PC-3 (cell line): ENCODE measurements at regions of chr4 and their contacts with region 1.

Region 1: DNA sequence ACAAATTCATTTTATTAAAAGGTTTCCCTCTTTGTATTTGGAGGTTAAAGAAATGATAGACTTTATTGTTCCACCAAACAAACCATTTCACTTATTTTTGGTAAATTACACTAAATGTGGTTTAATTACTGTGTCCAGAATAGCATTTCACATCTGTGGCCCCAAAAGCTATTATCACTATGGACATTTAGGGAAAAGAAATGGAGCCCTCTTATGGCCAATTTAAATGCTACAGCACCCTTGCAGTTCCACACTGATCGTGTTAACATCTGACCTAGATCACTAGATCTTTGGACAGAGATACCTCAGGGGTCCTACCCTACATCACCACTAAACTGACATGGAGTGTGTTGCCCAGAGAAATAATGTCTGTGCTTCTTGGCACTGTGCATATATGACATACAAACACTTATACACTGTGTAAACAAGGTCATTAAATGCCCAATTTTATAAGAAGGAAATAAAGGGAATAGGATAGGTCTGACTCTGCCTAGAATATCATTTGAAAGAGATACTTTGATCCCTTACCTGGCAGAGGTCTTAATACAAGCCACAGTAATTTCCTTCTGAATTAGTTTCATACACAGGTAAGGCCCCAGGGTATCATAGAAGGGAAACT is 163.9 kb downstream of the KDR start:
- DNase-seq: peak; percentile 66
- ATAC-seq: peak; percentile 88
- H3K4me3 ChIP-seq: no peak overlapping the region
- H3K27ac ChIP-seq: no peak overlapping the region
- H3K4me1 ChIP-seq: no peaks in the 10 kb centered on the region
- H3K27me3 ChIP-seq: peaks cover 17% of the 10 kb centered on the region
- CTCF ChIP-seq: peak; percentile 93

Region 2: DNA sequence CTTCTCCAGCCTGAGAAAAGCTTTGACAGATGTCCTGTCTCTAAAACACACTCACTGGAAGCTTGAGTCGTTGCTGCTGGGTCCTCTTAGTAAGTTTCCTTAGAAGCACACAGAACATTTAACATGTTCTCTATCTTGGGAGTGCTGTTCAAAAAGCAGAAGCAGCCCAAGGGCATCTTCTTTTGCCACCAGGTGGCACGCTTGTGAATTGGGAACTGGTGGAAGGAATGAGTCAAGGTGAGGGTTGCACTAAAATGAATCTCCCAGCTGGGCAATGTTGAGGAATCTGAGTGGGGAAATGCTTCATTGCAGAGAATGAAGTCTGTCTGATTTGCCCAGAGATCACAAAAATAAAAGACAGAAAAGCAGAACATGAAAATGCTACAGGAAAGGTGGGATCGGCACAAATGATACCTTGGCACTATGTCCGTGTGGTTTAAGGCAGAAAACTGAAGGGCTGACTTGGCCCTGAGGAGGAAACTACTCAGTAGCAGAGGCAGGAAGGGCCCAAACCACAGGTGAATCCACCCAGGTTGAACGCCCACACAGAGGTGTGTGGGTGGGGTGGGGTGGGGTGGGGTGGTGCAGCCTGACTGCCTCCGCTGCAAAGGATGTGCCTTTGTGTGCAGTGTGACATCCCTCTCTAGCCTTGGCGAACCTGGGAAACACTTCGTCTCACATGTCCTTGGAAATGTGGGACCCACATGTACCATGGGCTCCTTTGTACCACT is 277.7 kb before region 1 on chr4:
- CTCF ChIA-PET with region 1: no interaction called
- POLR2A ChIA-PET with region 1: no interaction called
- intact Hi-C with region 1: loop called (anchors 2 kb)
- DNase-seq: peak; percentile 84
- ATAC-seq: peak; percentile 49
- H3K4me3 ChIP-seq: no peak overlapping the region
- H3K27ac ChIP-seq: no peak overlapping the region
- H3K4me1 ChIP-seq: no peaks in the 10 kb centered on the region
- H3K27me3 ChIP-seq: peaks cover 25% of the 10 kb centered on the region; the same call in 1 of the 2 replicates
- CTCF ChIP-seq: peak; percentile 89

Region 3: DNA sequence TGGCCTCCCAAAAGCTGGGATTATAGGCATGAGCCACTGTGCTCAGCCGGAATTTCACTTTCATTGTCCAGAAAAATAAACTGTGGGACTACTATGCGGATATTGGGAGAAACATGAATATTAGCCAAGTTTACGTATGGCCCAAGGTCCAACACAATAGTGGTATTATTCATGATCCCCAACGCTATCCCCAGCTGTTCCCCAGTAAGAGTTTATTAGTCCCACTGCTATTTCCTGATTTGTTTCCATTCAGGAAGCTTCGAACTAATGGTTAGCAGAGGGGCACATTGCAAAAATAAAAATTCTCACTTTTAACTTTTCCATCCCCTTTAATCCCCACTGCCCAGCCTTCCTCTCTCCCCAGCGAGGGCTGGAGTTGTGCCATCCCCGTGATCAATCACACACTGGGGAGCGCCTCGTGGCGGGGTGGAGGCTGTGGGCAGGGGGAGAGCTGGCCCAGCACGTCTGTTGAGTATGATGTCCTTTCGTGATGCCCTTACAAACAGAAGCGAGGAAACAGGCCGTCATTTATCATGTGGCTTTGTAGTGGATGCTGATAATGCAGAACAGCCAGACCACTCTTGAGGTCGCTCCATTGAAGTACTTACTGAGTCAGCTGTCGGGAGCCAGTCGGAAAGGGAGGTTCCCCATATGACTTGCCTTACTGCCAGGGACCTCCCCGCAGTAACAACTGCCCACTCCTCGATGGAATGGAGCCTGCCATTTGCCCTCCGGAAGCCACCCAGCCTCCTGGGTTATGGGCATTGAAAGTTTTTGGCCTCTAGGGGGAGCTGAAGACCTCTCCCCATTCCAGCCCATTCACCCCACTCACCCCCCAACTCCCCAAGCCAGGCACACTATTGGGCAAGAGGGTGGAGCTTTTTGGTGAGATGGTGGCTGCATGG is 47.0 kb after region 1 on chr4:
- CTCF ChIA-PET with region 1: no interaction called
- POLR2A ChIA-PET with region 1: no interaction called
- intact Hi-C with region 1: no loop called
- DNase-seq: peak; percentile 38
- ATAC-seq: no peak; the same call in 1 of the 2 replicates
- H3K4me3 ChIP-seq: no peak overlapping the region
- H3K27ac ChIP-seq: no peak overlapping the region
- H3K4me1 ChIP-seq: peaks cover 9% of the 10 kb centered on the region
- H3K27me3 ChIP-seq: no peaks in the 10 kb centered on the region
- CTCF ChIP-seq: peak; percentile 68